H1 (cell line): ENCODE measurements at regions of chr2 and their contacts with region 1.

Region 1: DNA sequence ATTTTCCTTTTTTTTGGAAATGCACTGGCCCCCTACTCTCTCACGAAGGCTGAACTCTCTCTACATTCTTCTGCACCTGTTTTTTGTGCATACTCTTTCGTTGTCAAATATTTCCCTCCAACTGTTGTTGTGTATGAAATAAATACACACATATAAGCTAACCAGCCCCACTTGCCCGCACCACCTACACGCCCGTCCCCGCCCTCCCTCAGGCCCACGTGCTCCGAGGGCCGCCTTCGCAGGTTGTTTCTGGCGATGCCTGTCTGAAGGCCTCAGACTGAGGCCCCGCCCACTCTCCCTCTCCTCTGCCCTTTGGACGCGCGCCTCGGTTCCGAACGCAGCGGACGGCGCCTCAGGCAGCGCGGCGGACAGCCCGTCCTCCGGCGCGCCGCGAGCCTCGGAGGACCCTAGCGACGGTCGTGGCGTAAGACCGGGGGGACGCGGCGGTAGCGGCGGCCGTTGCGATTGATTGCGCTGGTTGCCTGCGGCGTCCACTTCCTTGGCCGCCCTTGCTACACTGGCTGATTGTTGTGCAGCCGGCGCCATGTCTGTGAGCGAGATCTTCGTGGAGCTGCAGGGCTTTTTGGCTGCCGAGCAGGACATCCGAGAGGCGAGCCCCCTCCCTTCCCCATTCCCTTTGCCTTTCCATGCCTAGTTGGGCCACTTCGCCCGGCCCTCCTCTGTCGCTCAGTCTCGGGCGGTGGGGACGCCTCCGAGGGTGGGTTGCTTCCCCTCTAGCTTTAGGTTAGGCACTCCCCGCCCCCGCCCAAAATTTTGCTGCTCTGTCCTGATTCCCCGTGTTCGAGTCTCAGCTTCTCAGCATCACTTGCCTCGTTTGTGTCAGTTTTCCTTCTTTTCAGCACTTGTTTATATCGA is at the start of gene TSN:
- DNase-seq: peak; percentile 94 to 96
- H3K4me3 ChIP-seq: peak within 1 kb of the TSS; percentile 94 to 100 (median 96)
- H3K27ac ChIP-seq: peak within 1 kb of the TSS; percentile 79
- H3K4me1 ChIP-seq: no peaks in the 10 kb centered on the region; a peak in 1 of 7 replicates
- H3K27me3 ChIP-seq: no peaks in the 10 kb centered on the region
- CTCF ChIP-seq: peak in 1 of 3 experiments; percentile 11; a peak in 1 of 4 replicates
- EP300 ChIP-seq: 0 out of 3 replicates have a peak, but pooled peaks of 1 of the 2 experiments have one; percentile 12
- POLR2A ChIP-seq: peak; percentile 81 to 84
- RAD21 ChIP-seq: no peak; a peak in 1 of 4 replicates
- total RNA-seq, gene TSN: 96.1 and 96.3 TPM in 2 replicates

Region 2: GRCh38 chr2:121717529-121717928 is 37.9 kb before region 1 on chr2:
- CTCF ChIA-PET with region 1: no interaction called
- POLR2A ChIA-PET with region 1: no interaction called
- DNase-seq: no peak
- H3K4me3 ChIP-seq: no peak overlapping the region
- H3K27ac ChIP-seq: no peak overlapping the region
- H3K4me1 ChIP-seq: no peaks in the 10 kb centered on the region
- H3K27me3 ChIP-seq: no peaks in the 10 kb centered on the region
- CTCF ChIP-seq: no peak
- EP300 ChIP-seq: no peak
- POLR2A ChIP-seq: no peak
- RAD21 ChIP-seq: no peak

Region 3: GRCh38 chr2:121736462-121737341 is 18.8 kb before region 1 on chr2 and contains the start of gene NIFK:
- CTCF ChIA-PET with region 1: no interaction called
- POLR2A ChIA-PET with region 1: interaction called, 13 read pairs
- DNase-seq: peak; percentile 95 to 100
- H3K4me3 ChIP-seq: peak within 1 kb of the TSS; percentile 79 to 97 (median 96)
- H3K27ac ChIP-seq: peak within 1 kb of the TSS; percentile 12; the same call in 1 of the 2 replicates
- H3K4me1 ChIP-seq: peaks cover 0 to 5% (median 1%) of the 10 kb centered on the region in 4 experiments; a peak in 4 of 7 replicates
- H3K27me3 ChIP-seq: no peaks in the 10 kb centered on the region
- CTCF ChIP-seq: no peak
- EP300 ChIP-seq: no peak
- POLR2A ChIP-seq: peak; percentile 47 to 85
- RAD21 ChIP-seq: peak in 1 of 2 experiments; percentile 3; a peak in 1 of 4 replicates
- total RNA-seq, gene NIFK: 99.3 and 117 TPM in 2 replicates

Region 4: GRCh38 chr2:121768143-121768755 is 12.8 kb after region 1 on chr2:
- CTCF ChIA-PET with region 1: interaction called, 5 read pairs
- POLR2A ChIA-PET with region 1: interaction called, 16 read pairs
- DNase-seq: no peak
- H3K4me3 ChIP-seq: no peak overlapping the region
- H3K27ac ChIP-seq: no peak overlapping the region
- H3K4me1 ChIP-seq: no peaks in the 10 kb centered on the region
- H3K27me3 ChIP-seq: no peaks in the 10 kb centered on the region
- CTCF ChIP-seq: no peak
- EP300 ChIP-seq: no peak
- POLR2A ChIP-seq: peak; percentile 20 to 61; a peak in 2 of 3 replicates
- RAD21 ChIP-seq: no peak